GM12878 (cell line): ENCODE measurements at regions of chr1 and their contacts with region 1.

Region 1: GRCh38 chr1:110209715-110210603 is at the start of gene KCNC4:
- DNase-seq: peak; percentile 65
- ATAC-seq: peak; percentile 91
- H3K4me3 ChIP-seq: peak within 1 kb of the TSS; percentile 73
- H3K27ac ChIP-seq: no peak within 1 kb of the TSS
- H3K4me1 ChIP-seq: peaks cover 4% of the 10 kb centered on the region; the same call in 1 of the 2 replicates
- H3K27me3 ChIP-seq: peaks cover 0 to 14% of the 10 kb centered on the region in 2 experiments; a peak in 1 of 4 replicates
- CTCF ChIP-seq: no peak
- EP300 ChIP-seq: no peak; a peak in 1 of 4 replicates
- POLR2A ChIP-seq: no peak
- RAD21 ChIP-seq: no peak
- polyA plus RNA-seq, gene KCNC4: 0.06 to 0.16 TPM

Region 2: GRCh38 chr1:109807822-109808680 is 401.9 kb before region 1 on chr1:
- CTCF ChIA-PET with region 1: no interaction called
- POLR2A ChIA-PET with region 1: no interaction called
- RAD21 ChIA-PET with region 1: no interaction called
- SMC1A ChIA-PET with region 1: no interaction called
- in situ Hi-C with region 1: no loop called
- intact Hi-C with region 1: no loop called
- DNase-seq: no peak
- ATAC-seq: no peak
- H3K4me3 ChIP-seq: no peak overlapping the region
- H3K27ac ChIP-seq: no peak overlapping the region
- H3K4me1 ChIP-seq: no peaks in the 10 kb centered on the region
- H3K27me3 ChIP-seq: no peaks in the 10 kb centered on the region
- CTCF ChIP-seq: no peak
- EP300 ChIP-seq: no peak
- POLR2A ChIP-seq: no peak
- RAD21 ChIP-seq: no peak

Region 3: GRCh38 chr1:110196917-110197765 is 12.8 kb before region 1 on chr1:
- CTCF ChIA-PET with region 1: interaction called, 13 read pairs
- POLR2A ChIA-PET with region 1: no interaction called
- RAD21 ChIA-PET with region 1: interaction called, 8 read pairs
- SMC1A ChIA-PET with region 1: interaction called, 8 read pairs
- in situ Hi-C with region 1: no loop called
- intact Hi-C with region 1: no loop called
- DNase-seq: no peak
- ATAC-seq: peak; percentile 98
- H3K4me3 ChIP-seq: no peak overlapping the region
- H3K27ac ChIP-seq: no peak overlapping the region
- H3K4me1 ChIP-seq: no peaks in the 10 kb centered on the region
- H3K27me3 ChIP-seq: peaks cover 0 to 2% of the 10 kb centered on the region in 2 experiments; a peak in 2 of 4 replicates
- CTCF ChIP-seq: peak; percentile 87 to 92 (median 91)
- EP300 ChIP-seq: no peak
- POLR2A ChIP-seq: no peak
- RAD21 ChIP-seq: peak; percentile 61

Region 4: DNA sequence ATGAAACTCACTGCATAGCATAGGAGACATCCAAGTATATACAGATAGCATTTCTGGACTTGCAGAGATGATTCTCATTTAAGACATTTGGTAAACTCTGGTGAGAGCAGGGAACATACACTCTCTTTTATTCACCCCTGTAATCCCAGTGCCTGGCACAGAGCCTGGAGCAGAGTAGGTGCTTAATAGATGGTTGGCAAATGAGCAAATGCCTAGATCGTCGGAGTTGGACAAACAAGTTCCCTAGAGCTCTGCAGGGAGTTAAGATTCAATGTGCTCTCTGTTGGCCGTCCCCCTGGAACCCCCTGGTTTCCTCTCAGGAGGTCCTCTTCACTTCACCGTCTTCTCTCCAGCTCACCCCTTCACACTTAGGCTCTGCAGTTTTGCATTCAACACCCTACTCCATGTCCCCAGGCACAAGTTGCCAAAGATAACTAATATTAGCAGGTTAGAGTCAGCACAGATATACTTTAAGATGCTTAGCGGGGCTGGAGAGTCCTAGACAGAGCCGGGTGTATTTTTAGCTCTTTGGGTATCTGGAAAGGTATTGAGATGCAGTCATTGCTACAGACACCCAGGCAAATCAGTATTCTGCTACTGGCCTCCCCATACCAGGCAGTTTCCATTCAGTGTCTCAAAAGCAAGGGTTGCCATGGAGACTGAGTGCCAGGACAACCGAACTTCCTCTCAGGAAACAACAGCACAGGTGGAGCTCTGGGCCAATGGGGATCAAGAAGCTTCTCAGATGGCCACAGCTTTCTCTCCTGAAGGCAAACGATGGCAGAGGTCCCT is 45.2 kb after region 1 on chr1:
- CTCF ChIA-PET with region 1: interaction called, 12 read pairs
- POLR2A ChIA-PET with region 1: no interaction called
- RAD21 ChIA-PET with region 1: interaction called, 5 read pairs
- SMC1A ChIA-PET with region 1: interaction called, 3 read pairs
- in situ Hi-C with region 1: no loop called
- intact Hi-C with region 1: no loop called
- DNase-seq: no peak
- ATAC-seq: peak; percentile 73
- H3K4me3 ChIP-seq: no peak overlapping the region
- H3K27ac ChIP-seq: no peak overlapping the region
- H3K4me1 ChIP-seq: peaks cover 6% of the 10 kb centered on the region
- H3K27me3 ChIP-seq: no peaks in the 10 kb centered on the region
- CTCF ChIP-seq: no peak
- EP300 ChIP-seq: no peak
- POLR2A ChIP-seq: no peak
- RAD21 ChIP-seq: no peak

Region 5: DNA sequence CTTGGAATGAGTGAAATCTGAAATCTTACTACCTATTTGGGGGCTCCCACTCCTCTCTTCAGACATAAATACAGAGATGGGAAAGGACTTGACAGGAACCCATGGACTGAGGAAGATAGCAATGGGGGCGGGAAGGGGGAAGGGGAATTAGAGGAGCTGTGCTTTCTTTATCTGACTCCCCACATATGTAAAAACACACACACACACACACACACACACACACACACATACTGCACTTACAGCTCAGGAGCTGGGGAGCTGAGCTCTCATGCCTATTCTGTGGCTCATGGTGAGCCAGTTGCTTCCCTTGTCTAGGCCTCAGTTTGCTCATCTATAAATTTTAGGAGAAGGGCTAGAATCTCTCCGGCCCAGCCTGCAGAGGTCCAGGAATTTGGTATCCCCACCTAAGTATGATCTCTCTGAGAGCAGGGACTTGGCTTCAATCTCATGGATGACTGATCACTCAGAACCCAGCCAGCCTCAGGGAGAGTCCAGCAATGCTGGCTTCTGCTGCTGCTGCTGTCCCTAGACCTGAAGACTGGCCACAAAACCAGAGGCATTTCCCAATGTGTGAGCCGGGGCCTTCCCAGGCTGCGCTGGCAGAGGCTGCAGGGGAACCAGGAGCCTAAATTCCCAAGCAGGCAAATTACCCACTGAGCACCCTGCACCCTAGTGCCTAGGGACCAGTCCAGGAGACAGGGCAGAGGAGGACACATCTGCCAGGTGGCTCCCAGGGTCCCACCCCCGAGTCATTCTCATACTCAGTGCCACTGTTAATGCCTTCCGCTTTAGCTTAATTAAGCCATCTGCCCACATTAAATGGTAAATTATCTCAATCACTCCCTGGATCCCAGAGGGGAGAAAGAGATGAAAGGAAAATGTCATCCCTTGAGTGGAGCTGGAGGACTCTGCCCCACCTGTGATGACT is 71.7 kb after region 1 on chr1:
- CTCF ChIA-PET with region 1: interaction called, 37 read pairs
- POLR2A ChIA-PET with region 1: no interaction called
- RAD21 ChIA-PET with region 1: interaction called, 20 read pairs
- SMC1A ChIA-PET with region 1: interaction called, 18 read pairs
- in situ Hi-C with region 1: no loop called
- intact Hi-C with region 1: no loop called
- DNase-seq: no peak
- ATAC-seq: no peak
- H3K4me3 ChIP-seq: no peak overlapping the region
- H3K27ac ChIP-seq: no peak overlapping the region
- H3K4me1 ChIP-seq: no peaks in the 10 kb centered on the region
- H3K27me3 ChIP-seq: no peaks in the 10 kb centered on the region; a peak in 1 of 4 replicates
- CTCF ChIP-seq: no peak
- EP300 ChIP-seq: no peak
- POLR2A ChIP-seq: no peak
- RAD21 ChIP-seq: no peak

Region 6: DNA sequence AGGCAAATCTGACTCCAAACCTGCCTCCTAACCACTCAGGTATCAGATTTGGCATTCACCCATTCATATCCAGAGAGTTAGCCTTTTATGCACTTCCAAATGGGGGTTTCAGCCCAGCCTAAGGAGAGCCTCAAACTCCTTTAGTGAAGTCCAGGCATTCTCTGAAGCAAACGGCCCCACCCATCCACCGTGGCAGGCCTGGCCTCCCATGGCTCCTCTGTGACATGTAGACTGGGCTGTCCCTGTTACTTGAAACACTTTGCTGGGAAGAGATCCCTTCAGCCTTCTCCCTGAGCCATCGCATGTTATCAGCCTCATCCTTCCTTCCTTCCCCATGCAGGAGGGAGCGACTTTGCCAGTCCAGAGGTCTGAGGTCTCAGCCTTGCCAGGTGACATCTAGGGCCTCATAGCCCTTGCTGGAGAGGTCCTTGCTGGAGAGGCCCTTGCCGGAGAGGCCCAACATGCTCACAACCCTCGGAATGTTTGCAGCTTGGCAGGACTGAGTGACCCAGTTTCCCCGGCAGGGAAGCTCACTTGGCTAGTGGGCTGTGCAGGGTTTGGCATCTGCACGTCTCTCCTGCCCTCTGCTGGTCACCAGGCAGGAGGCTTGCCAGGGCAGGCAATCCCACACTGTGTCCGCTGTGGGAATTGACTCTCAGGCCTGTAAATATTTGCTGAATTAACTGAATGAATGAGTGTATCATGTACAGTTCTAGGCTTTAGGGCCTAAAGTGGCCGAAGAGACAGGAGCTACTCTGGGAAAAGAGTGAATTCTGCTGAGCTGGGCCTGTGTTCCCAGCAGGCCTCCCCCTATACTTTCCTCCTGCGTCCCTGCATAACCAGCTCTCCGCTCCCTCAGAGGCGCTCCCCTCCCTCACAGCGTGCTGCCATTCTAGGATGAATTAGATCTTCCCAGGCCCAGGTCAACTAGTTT is 102.5 kb after region 1 on chr1:
- CTCF ChIA-PET with region 1: interaction called, 753 read pairs
- POLR2A ChIA-PET with region 1: interaction called, 7 read pairs
- RAD21 ChIA-PET with region 1: interaction called, 319 read pairs
- SMC1A ChIA-PET with region 1: interaction called, 524 read pairs
- in situ Hi-C with region 1: no loop called
- intact Hi-C with region 1: loop called (anchors 1 kb)
- DNase-seq: peak; percentile 19
- ATAC-seq: peak; percentile 100
- H3K4me3 ChIP-seq: no peak overlapping the region
- H3K27ac ChIP-seq: no peak overlapping the region
- H3K4me1 ChIP-seq: no peaks in the 10 kb centered on the region
- H3K27me3 ChIP-seq: no peaks in the 10 kb centered on the region
- CTCF ChIP-seq: peak; percentile 93
- EP300 ChIP-seq: no peak
- POLR2A ChIP-seq: no peak
- RAD21 ChIP-seq: peak; percentile 97

Region 7: GRCh38 chr1:110407260-110408210 is 197.6 kb after region 1 on chr1 and contains the start of gene LAMTOR5:
- CTCF ChIA-PET with region 1: interaction called, 89 read pairs
- POLR2A ChIA-PET with region 1: no interaction called
- RAD21 ChIA-PET with region 1: interaction called, 25 read pairs
- SMC1A ChIA-PET with region 1: interaction called, 31 read pairs
- in situ Hi-C with region 1: loop called (anchors 5 kb)
- intact Hi-C with region 1: no loop called
- DNase-seq: peak; percentile 86
- ATAC-seq: peak; percentile 94
- H3K4me3 ChIP-seq: peak within 1 kb of the TSS; percentile 99
- H3K27ac ChIP-seq: peak within 1 kb of the TSS; percentile 85
- H3K4me1 ChIP-seq: peaks cover 10% of the 10 kb centered on the region
- H3K27me3 ChIP-seq: no peaks in the 10 kb centered on the region
- CTCF ChIP-seq: peak in 2 of 3 experiments; percentile 12 to 14; a peak in 2 of 6 replicates
- EP300 ChIP-seq: peak; percentile 22 to 49; a peak in 2 of 4 replicates
- POLR2A ChIP-seq: peak; percentile 97
- RAD21 ChIP-seq: peak; percentile 35; the same call in 1 of the 2 replicates
- polyA plus RNA-seq, gene LAMTOR5: 474 to 613 TPM

Region 8: DNA sequence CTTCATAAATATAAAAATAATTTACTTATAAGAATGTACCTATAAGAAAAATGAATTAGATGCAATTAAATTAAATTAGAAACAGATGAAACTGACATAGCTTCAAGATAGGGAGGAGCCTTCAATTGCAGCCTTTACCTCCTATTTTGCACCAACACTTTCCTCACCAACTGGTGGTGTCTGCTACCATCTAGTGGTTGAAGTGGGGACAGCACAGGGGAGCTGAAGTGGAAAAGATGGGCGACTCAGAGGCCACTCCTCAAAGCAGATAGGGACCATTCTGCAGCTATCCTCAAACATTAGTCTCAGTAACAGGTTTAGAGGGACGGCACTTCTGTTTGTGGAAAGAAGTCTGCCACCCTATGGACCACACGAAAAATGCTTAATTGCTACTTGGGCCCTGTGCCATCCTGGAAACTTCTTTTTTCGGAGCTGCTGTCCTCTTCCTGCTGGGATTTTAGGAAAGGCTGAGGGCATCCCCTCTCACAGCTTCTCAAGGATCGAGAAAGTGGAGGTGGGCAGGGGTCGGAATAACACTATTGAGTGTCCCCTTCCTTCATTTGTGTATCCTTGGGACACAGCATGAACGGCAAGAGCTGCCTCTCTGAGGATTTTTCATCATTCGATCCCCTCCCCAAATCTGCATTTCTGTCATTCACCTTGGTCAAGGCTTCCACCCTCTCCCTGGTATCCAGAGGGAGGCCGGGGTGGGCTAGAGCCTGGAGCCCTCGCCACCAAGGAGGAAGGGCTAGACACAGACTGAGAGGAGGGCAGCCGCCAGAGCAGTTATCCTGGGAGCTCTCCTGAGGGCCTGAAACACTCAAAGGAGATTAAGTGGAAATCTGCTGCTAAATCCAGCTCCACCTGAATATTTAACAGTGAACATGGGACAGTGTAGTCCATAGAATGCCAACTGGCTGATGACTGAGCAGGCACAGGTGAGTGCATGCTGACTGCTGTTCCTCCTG is 250.6 kb after region 1 on chr1:
- CTCF ChIA-PET with region 1: interaction called, 122 read pairs
- POLR2A ChIA-PET with region 1: interaction called, 3 read pairs
- RAD21 ChIA-PET with region 1: interaction called, 71 read pairs
- SMC1A ChIA-PET with region 1: interaction called, 46 read pairs
- in situ Hi-C with region 1: no loop called
- intact Hi-C with region 1: loop called (anchors 1 kb)
- DNase-seq: peak; percentile 38
- ATAC-seq: peak; percentile 96
- H3K4me3 ChIP-seq: no peak overlapping the region
- H3K27ac ChIP-seq: no peak overlapping the region
- H3K4me1 ChIP-seq: no peaks in the 10 kb centered on the region
- H3K27me3 ChIP-seq: no peaks in the 10 kb centered on the region
- CTCF ChIP-seq: peak; percentile 92 to 98 (median 97)
- EP300 ChIP-seq: no peak
- POLR2A ChIP-seq: no peak
- RAD21 ChIP-seq: peak; percentile 100

Region 9: DNA sequence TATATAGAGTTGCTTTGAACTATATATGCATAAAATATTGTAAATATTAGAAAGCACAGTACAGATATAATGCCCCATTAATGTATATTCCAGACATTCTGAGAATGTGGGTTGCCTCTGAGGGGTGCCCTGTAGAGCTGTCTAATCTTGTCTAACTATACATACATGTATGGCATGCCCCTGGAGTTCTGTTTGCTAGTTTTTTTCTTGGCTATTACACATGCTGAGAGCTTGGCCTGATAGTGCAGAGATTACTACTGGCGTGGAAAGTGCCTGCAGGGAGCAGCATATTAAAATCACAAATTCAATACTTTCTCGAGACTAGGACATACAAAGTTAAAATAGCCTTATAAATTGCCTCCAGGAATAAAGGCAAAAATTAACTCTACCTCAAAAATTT is 440.6 kb after region 1 on chr1:
- CTCF ChIA-PET with region 1: no interaction called
- POLR2A ChIA-PET with region 1: no interaction called
- RAD21 ChIA-PET with region 1: no interaction called
- SMC1A ChIA-PET with region 1: no interaction called
- in situ Hi-C with region 1: no loop called
- intact Hi-C with region 1: no loop called
- DNase-seq: no peak
- ATAC-seq: no peak
- H3K4me3 ChIP-seq: no peak overlapping the region
- H3K27ac ChIP-seq: no peak overlapping the region
- H3K4me1 ChIP-seq: peaks cover 7% of the 10 kb centered on the region; the same call in 1 of the 2 replicates
- H3K27me3 ChIP-seq: no peaks in the 10 kb centered on the region
- CTCF ChIP-seq: no peak
- EP300 ChIP-seq: no peak
- POLR2A ChIP-seq: no peak
- RAD21 ChIP-seq: no peak